Caco-2 (cell line): ENCODE measurements at regions of chr1 and their contacts with region 1.

Region 1: DNA sequence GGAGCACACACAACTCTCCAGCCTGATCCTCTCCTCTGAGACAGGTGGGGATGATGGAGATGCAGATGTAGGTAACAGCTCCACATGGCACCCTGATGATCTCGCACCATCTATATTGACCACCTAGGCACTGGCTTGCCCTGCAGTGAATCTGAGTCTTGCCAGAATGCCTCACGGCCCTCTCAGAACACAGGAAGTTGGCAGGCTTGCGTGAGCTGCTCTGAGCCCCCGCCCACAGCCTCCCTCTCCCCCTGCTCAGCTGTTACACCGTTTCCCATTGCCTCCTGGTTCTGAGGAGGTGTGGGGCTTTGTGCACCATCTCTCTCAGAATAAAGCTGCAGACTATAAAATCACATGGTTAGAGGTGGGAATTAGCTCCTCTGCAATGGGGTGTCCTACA is 48.0 kb downstream of the URB2 start:
- DNase-seq: no peak
- H3K4me3 ChIP-seq: no peak overlapping the region
- H3K4me3 Mint-ChIP-seq: no peak overlapping the region
- H3K27ac Mint-ChIP-seq: no peak overlapping the region
- H3K4me1 ChIP-seq: no peaks in the 10 kb centered on the region
- H3K4me1 Mint-ChIP-seq: no peaks in the 10 kb centered on the region
- H3K27me3 ChIP-seq: no peaks in the 10 kb centered on the region
- H3K27me3 Mint-ChIP-seq: no peaks in the 10 kb centered on the region
- CTCF ChIP-seq: no peak

Region 2: DNA sequence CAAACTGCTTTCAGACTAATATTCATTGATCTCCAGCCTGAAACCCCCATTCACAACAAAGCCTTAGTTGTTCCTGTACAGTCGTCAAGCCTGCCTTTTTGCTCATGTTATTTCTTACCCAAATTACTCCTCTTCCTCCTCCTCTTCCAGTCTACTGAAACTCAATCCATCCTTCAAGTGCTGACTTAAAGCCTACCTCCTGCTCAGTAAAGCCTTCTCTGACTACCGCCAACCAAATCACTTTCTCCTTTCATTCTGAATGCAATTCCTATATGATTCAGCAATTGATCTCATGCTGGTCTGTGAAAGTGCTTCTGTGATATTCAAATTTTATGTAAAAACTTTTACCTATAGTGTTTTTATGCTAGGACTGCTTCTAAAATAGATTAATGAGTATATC is 66.7 kb before region 1 on chr1:
- CTCF ChIA-PET with region 1: no interaction called
- POLR2A ChIA-PET with region 1: no interaction called
- intact Hi-C with region 1: no loop called
- DNase-seq: no peak
- H3K4me3 ChIP-seq: no peak overlapping the region
- H3K4me3 Mint-ChIP-seq: no peak overlapping the region
- H3K27ac Mint-ChIP-seq: no peak overlapping the region
- H3K4me1 ChIP-seq: no peaks in the 10 kb centered on the region
- H3K4me1 Mint-ChIP-seq: no peaks in the 10 kb centered on the region
- H3K27me3 ChIP-seq: no peaks in the 10 kb centered on the region
- H3K27me3 Mint-ChIP-seq: no peaks in the 10 kb centered on the region
- CTCF ChIP-seq: no peak

Region 3: GRCh38 chr1:229685149-229685548 is 11.1 kb after region 1 on chr1:
- CTCF ChIA-PET with region 1: no interaction called
- POLR2A ChIA-PET with region 1: no interaction called
- intact Hi-C with region 1: loop called (anchors 1 kb)
- DNase-seq: no peak
- H3K4me3 ChIP-seq: no peak overlapping the region
- H3K4me3 Mint-ChIP-seq: no peak overlapping the region
- H3K27ac Mint-ChIP-seq: no peak overlapping the region
- H3K4me1 ChIP-seq: no peaks in the 10 kb centered on the region
- H3K4me1 Mint-ChIP-seq: no peaks in the 10 kb centered on the region
- H3K27me3 ChIP-seq: no peaks in the 10 kb centered on the region
- H3K27me3 Mint-ChIP-seq: peaks cover 3% of the 10 kb centered on the region
- CTCF ChIP-seq: no peak

Region 4: DNA sequence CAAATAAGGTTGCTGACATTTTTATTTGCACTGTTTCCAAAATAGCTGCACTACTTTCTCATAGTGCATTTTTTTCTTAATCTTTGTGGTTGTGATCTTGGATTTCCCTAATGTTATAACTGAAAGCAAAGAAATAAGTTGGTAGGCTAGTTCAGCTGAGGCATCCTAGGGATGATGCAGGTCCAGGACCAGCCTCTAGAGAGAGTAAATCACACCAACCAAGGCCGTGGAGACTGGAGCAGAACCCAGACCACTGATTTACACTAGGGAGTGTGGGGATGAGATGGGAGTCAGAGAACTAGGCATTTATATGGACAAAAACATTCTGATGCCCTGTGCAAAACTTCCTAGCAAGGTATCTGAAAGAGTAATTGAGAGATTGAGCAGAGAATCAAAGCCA is 56.5 kb after region 1 on chr1:
- CTCF ChIA-PET with region 1: no interaction called
- POLR2A ChIA-PET with region 1: no interaction called
- intact Hi-C with region 1: no loop called
- DNase-seq: no peak
- H3K4me3 ChIP-seq: no peak overlapping the region
- H3K4me3 Mint-ChIP-seq: no peak overlapping the region
- H3K27ac Mint-ChIP-seq: no peak overlapping the region
- H3K4me1 ChIP-seq: no peaks in the 10 kb centered on the region
- H3K4me1 Mint-ChIP-seq: no peaks in the 10 kb centered on the region
- H3K27me3 ChIP-seq: no peaks in the 10 kb centered on the region
- H3K27me3 Mint-ChIP-seq: no peaks in the 10 kb centered on the region
- CTCF ChIP-seq: no peak